A673 (cell line): ENCODE measurements at regions of chr6 and their contacts with region 1.

Region 1: DNA sequence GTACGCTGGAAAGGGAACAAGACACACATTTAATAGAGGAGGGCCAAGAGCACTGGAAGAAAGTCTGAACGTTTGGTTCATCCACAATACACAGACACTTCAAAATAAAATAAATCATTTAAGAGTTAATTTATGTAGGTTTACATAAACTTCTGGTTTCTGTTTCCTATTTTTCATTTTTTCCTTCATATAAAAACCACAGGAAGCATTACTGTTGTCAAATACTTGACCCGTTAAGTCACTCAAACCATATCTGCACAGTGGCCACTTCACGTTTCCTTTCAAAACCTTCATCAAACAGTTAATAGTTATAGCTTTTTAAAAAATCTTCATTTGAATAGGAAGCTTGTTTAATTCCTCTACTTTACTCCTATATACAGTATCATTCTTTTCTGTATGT is 257.6 kb upstream of the THEMIS start:
- DNase-seq: no peak
- H3K4me3 ChIP-seq: no peak overlapping the region
- H3K27ac ChIP-seq: no peak overlapping the region
- H3K4me1 ChIP-seq: peaks cover 17% of the 10 kb centered on the region
- H3K27me3 ChIP-seq: no peaks in the 10 kb centered on the region
- CTCF ChIP-seq: no peak

Region 2: GRCh38 chr6:128186729-128187128 is 28.2 kb after region 1 on chr6:
- CTCF ChIA-PET with region 1: no interaction called
- POLR2A ChIA-PET with region 1: interaction called, 13 read pairs
- intact Hi-C with region 1: no loop called
- DNase-seq: no peak
- H3K4me3 ChIP-seq: no peak overlapping the region
- H3K27ac ChIP-seq: no peak overlapping the region
- H3K4me1 ChIP-seq: no peaks in the 10 kb centered on the region
- H3K27me3 ChIP-seq: no peaks in the 10 kb centered on the region
- CTCF ChIP-seq: no peak